KBM-7 (cell line): ENCODE measurements at regions of chr6 and their contacts with region 1.

Region 1: GRCh38 chr6:168370310-168370991 is 50.9 kb upstream of the DACT2 start:
- DNase-seq: peak; percentile 66

Region 2: DNA sequence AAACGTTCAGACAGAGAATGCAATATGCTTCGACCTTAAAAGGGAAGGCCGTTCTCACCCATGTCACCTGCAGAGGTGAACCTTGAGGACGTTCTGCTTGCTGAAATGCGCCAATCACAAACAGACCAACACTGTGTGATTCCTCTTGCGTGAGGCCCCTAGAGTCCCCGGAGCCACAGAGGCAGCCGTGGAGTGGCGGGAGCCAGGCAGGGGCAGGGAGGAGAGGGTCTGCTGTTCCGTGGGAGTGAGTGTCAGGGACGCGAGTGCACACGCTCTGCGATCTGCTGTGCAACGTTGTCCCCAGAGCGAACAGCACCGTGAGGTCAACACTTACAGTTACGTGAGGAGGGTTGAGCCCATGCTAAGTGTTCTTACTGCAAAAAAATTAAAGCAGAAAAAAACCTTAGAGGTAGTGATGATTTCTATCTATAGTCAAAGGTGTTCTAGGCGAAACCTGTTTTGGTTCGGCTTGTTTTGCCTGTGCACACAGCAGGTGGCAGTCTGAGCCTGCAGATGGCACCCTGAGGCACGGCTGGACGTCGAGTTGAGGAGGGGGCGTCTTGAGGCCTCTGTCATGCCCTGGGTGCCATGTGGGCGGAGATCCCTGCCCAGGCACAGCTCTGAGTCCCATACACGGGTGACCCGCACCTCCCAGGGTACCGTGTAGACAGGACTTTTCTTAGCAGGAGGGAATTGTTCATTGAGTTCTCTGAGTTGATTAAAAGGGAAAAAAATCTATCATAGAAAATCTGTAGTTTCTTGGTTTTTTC is 219.7 kb before region 1 on chr6:
- in situ Hi-C with region 1: no loop called
- DNase-seq: no peak

Region 3: DNA sequence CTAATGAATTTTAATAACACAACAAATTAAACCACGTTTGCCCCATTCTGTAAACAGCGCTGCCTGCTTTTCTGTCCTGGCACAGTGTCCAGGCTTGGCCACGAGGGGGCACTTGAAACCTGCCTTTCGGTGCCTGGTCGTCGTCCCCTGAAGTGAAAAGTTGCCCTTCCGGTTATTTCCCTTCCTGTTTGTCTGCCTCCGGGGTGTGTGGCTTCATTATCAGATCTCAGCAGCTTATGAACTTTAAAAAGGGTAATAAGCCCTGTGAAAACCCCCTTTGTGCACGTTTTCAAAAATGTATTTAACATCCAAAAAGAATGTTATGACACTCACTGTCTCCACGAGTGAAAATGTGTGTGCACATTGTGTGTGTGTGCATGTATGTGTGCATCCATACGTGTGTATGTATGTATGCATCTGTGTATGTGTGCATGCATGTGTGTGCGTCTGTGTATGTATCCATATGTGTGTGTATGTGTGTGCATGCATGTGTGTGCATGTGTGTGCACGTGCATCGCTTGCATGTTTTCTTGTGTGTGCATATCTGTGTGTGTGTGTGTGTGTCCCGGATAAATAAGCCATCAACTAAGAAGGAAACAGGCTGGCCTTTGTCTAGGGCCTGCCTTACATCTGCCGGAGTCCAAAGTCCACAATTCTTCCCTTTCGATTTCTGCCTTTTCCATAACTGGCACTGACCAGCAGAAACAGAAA is 524.8 kb after region 1 on chr6:
- in situ Hi-C with region 1: loop called (anchors 25 kb)
- DNase-seq: peak; percentile 82